Stomach (tissue), 19 donors: ENCODE measurements at regions of chr2 and their contacts with region 1.

Region 1: GRCh38 chr2:7593360-7593759 is 676.1 kb downstream of the RNF144A start:
- DNase-seq: peak in 1 of 2 donors; percentile 20
- H3K4me3 ChIP-seq: no peak overlapping the region
- H3K27ac ChIP-seq: no peak overlapping the region
- H3K4me1 ChIP-seq: no peaks in the 10 kb centered on the region
- H3K27me3 ChIP-seq: no peaks in the 10 kb centered on the region
- CTCF ChIP-seq: no peak
- EP300 ChIP-seq: no peak
- POLR2A ChIP-seq: no peak

Region 2: GRCh38 chr2:7707723-7708122 is 114.4 kb after region 1 on chr2:
- intact Hi-C with region 1: loop called (anchors 10 kb)
- DNase-seq: no peak
- H3K4me3 ChIP-seq: no peak overlapping the region
- H3K27ac ChIP-seq: no peak overlapping the region
- H3K4me1 ChIP-seq: no peaks in the 10 kb centered on the region
- H3K27me3 ChIP-seq: no peaks in the 10 kb centered on the region
- CTCF ChIP-seq: no peak
- EP300 ChIP-seq: no peak
- POLR2A ChIP-seq: no peak